Panc1 (cell line): ENCODE measurements at regions of chr19 and their contacts with region 1.

Region 1: DNA sequence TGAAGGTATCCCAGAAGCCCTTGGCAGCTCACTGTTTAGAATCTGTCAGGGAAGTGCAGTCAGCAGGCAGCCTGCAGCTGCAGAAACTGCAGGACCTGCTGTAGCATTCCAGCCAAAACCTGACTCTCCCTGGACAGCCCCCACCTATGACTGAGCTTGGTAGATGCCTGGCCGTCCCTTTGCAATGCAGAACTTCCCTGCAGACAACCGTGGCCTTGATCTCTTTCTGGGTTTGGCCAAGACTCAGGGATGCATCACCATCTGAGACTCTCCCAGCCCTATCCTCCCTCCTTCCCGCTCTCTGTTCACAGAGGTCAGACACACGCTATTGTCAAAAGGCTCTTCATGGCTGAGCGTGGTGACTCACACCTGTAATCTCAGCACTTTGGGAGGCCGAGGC is 99.4 kb downstream of the ZNF557 start:
- DNase-seq: no peak
- ATAC-seq: no peak
- H3K4me3 ChIP-seq: no peak overlapping the region
- H3K27ac ChIP-seq: no peak overlapping the region
- H3K4me1 ChIP-seq: no peaks in the 10 kb centered on the region
- H3K27me3 ChIP-seq: no peaks in the 10 kb centered on the region
- CTCF ChIP-seq: no peak

Region 2: GRCh38 chr19:7137120-7137519 is 31.8 kb before region 1 on chr19:
- CTCF ChIA-PET with region 1: no interaction called
- POLR2A ChIA-PET with region 1: interaction called, 18 read pairs
- in situ Hi-C with region 1: no loop called
- intact Hi-C with region 1: no loop called
- DNase-seq: no peak
- ATAC-seq: no peak
- H3K4me3 ChIP-seq: no peak overlapping the region
- H3K27ac ChIP-seq: no peak overlapping the region
- H3K4me1 ChIP-seq: no peaks in the 10 kb centered on the region; the same call in 1 of the 2 replicates
- H3K27me3 ChIP-seq: no peaks in the 10 kb centered on the region
- CTCF ChIP-seq: no peak

Region 3: DNA sequence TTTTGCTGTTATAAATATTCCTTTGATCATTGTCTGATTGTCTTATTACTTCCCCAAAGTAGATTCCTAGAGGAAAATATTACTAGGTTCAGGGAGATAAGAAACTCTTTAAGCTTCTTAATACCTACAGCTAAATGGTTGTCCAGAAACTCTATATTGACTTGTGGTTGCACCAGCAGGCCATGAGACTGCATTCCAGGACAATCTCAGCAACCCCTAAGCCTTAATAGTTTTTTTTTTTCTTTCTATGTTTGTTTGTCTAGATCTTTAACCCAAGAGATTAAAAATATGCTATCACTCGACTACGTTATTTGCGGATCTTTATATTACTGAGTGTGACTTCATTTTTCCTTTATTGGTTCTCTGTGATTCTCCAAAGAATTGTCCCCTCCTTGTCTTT is 24.2 kb before region 1 on chr19:
- CTCF ChIA-PET with region 1: interaction called, 12 read pairs
- POLR2A ChIA-PET with region 1: no interaction called
- in situ Hi-C with region 1: no loop called
- intact Hi-C with region 1: no loop called
- DNase-seq: no peak
- ATAC-seq: no peak
- H3K4me3 ChIP-seq: no peak overlapping the region
- H3K27ac ChIP-seq: no peak overlapping the region
- H3K4me1 ChIP-seq: no peaks in the 10 kb centered on the region
- H3K27me3 ChIP-seq: no peaks in the 10 kb centered on the region
- CTCF ChIP-seq: no peak

Region 4: GRCh38 chr19:7408251-7408650 is 239.3 kb after region 1 on chr19:
- CTCF ChIA-PET with region 1: no interaction called
- POLR2A ChIA-PET with region 1: no interaction called
- in situ Hi-C with region 1: no loop called
- intact Hi-C with region 1: no loop called
- DNase-seq: no peak
- ATAC-seq: no peak
- H3K4me3 ChIP-seq: no peak overlapping the region
- H3K27ac ChIP-seq: no peak overlapping the region
- H3K4me1 ChIP-seq: no peaks in the 10 kb centered on the region
- H3K27me3 ChIP-seq: no peaks in the 10 kb centered on the region
- CTCF ChIP-seq: no peak